GM10248 (cell line): ENCODE measurements at regions of chr3 and their contacts with region 1.

Region 1: GRCh38 chr3:48739955-48740823 is 23.2 kb upstream of the IP6K2 start:
- DNase-seq: peak; percentile 82
- CTCF ChIP-seq: peak; percentile 83

Region 2: GRCh38 chr3:48685602-48686511 is 54.3 kb before region 1 on chr3 and contains the start of gene NCKIPSD:
- CTCF ChIA-PET with region 1: interaction called, 11 read pairs
- POLR2A ChIA-PET with region 1: interaction called, 5 read pairs
- DNase-seq: peak; percentile 97
- CTCF ChIP-seq: peak; percentile 94

Region 3: DNA sequence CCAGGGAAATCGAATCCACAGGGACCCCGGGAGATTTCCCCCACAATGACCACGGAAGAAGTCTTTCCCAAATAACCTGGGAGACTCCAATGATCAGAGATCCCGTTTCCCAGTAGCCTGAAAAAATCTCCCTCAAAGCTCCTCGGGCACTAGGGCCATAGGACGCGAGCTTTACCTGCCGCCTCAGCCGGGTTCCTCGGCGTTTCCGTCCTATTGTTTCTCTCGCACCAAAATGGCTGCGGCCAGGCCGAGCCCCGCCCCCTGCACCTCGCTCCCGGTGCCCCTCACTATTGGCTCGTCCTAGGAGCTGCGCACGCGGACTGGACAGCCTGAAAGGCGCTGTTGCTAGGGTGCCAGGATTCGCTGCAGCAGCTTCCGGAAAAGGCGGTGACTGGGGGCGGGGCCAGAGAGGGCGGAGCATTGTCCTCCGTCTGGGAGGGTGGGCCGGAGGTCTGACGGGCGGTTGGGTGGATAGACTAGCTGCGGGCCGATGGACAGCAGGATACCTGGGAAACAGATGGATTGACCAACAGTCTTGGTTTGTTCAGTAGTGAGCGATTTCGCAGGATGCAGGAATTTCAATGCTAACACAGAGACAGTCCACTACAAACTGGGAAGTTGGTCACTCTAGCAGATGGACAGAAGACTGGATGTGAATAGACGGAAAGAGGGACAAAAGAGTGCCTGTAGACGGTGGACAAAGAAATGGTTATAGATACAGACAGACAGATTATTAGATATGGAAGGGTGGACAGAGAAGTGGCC is 23.0 kb before region 1 on chr3 and contains the start of gene IP6K2:
- CTCF ChIA-PET with region 1: interaction called, 30 read pairs
- POLR2A ChIA-PET with region 1: no interaction called
- DNase-seq: peak; percentile 99
- CTCF ChIP-seq: no peak

Region 4: DNA sequence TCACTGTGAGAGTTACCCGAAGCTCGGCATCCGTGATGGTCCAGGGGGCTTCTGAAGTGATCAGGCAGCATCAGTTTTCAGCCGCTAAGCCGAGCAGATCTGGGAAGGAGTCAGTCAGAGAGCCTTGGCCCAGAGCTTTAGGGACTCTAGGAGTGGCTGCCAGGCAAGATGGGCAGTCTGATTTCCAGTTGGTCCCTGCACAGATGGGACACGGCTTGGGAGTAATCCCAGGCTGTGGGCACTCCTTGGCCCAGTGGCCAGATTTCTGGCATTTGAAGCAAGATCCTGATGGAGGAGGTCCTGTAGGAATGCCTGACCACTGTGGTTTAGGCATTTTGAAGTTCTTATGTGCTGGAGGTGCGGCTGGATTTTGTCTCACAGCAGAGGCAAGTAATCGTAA is 12.7 kb before region 1 on chr3:
- CTCF ChIA-PET with region 1: interaction called, 21 read pairs
- POLR2A ChIA-PET with region 1: no interaction called
- DNase-seq: no peak
- CTCF ChIP-seq: no peak

Region 5: DNA sequence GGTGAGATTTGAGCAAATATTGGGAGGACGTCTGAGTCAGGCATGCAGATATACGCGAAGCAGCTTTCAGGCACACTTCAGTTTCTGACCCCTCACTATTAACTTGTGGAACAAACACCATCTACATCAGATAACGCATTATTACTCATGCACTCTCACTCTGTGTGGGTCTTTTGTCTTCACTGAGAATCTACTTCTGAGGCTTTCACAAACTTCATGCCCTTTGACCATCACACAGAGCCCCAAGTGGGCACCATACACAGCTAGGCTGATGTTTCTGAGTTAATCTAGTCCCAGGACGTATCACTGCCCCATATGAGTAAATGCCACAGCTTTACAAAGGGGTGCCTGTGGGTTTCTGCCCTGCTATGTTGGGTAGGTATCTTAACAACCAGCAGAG is 16.5 kb after region 1 on chr3:
- CTCF ChIA-PET with region 1: interaction called, 23 read pairs
- POLR2A ChIA-PET with region 1: interaction called, 3 read pairs
- DNase-seq: no peak
- CTCF ChIP-seq: no peak

Region 6: GRCh38 chr3:48765376-48765775 is 25.2 kb after region 1 on chr3:
- CTCF ChIA-PET with region 1: interaction called, 13 read pairs
- POLR2A ChIA-PET with region 1: no interaction called
- DNase-seq: no peak
- CTCF ChIP-seq: peak; percentile 12

Region 7: DNA sequence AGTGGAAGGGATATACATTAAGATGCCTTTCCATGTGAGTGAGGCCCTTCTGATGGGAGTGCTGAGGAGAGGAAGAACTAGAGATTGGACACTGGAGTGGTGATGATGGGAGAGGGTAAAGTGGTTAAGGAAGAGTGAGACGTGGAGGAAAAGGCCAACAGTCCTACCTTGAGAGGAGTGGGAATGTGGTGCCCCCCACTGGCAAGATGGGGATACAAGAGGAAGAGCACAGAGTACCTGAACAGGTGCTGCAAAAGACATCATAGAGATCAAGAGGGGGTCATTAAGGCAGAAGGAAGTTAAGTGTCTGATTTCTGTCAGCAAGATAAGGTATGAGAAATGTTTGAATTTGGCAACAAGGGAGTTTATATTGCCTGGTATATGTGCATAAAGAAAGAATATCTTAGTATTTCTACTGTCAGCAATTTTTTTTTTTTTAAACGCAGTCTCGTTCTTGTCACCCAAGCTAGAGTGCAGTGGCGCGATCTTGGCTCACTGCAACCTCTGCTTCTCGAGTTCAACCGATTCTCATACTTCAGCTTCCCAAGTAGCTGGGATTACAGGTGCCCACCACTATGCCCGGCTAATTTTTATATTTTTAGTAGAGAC is 212.4 kb after region 1 on chr3:
- CTCF ChIA-PET with region 1: interaction called, 22 read pairs
- POLR2A ChIA-PET with region 1: no interaction called
- DNase-seq: peak; percentile 48
- CTCF ChIP-seq: peak; percentile 47